Activated CD4-positive, alpha-beta memory T cell treated with anti-CD3 and anti-CD28 coated beads for 36 hours (primary cell): ENCODE measurements at regions of chr17 and their contacts with region 1.

Region 1: DNA sequence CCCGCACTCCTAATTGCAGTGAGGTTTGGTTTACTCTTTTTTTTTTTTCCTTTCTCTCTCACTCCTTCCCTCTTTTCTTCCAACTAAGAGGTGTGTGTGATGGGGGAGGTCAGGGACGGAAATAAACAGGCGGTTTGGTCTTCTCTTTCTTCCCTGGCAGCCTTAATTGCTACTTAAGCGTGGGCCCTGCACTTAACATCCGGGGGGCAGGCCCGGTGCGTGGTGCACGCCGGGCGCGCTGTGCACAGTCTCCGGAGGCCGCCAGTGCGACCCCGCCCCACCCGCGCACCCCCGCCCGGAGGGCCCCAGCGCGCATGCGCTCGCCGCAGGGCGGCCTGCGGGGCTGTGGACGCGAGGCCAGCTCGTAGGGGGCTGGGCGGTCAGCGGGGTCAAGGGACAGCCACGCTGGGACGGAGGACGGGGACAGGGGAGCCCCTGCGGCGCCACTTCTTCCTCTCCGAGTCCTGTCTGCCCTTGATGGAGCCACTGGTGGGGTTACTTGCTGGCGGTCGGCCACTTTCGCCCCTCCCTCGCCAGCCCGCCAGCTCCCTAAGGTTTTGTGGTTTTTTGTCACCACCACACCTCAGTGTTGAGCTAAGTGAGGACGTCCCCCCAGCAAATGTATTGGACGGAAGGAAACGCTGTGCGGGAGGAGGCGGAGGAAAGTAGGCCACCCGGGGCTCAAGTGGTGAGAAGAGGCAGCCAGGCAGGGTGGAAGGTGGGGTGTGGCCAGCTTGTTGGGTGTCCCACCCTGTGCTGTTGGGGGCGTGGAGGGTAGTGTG is 120.9 kb downstream of the MRM1 start:
- DNase-seq: peak; percentile 90
- H3K4me3 Mint-ChIP-seq: peak overlapping the region; percentile 78
- H3K27ac Mint-ChIP-seq: peak overlapping the region; percentile 97
- H3K4me1 Mint-ChIP-seq: peaks cover 42% of the 10 kb centered on the region
- H3K27me3 Mint-ChIP-seq: no peaks in the 10 kb centered on the region

Region 2: GRCh38 chr17:36545465-36546417 is 176.6 kb before region 1 on chr17:
- CTCF ChIA-PET with region 1: no interaction called
- POLR2A ChIA-PET with region 1: no interaction called
- intact Hi-C with region 1: loop called (anchors 10 kb)
- DNase-seq: peak; percentile 98
- H3K4me3 Mint-ChIP-seq: peak overlapping the region; percentile 90
- H3K27ac Mint-ChIP-seq: peak overlapping the region; percentile 98
- H3K4me1 Mint-ChIP-seq: peaks cover 40% of the 10 kb centered on the region
- H3K27me3 Mint-ChIP-seq: no peaks in the 10 kb centered on the region